Prostate gland (tissue), 2 donors: ENCODE measurements at regions of chr18 and their contacts with region 1.

Region 1: GRCh38 chr18:76875390-76876325 is 53.3 kb downstream of the ZNF236 start:
- DNase-seq: peak; percentile 26
- H3K4me3 ChIP-seq: no peak overlapping the region
- H3K27ac ChIP-seq: no peak overlapping the region
- H3K4me1 ChIP-seq: no peaks in the 10 kb centered on the region
- H3K27me3 ChIP-seq: no peaks in the 10 kb centered on the region
- CTCF ChIP-seq: peak; percentile 21 to 59 (median 52)
- POLR2A ChIP-seq: no peak

Region 2: DNA sequence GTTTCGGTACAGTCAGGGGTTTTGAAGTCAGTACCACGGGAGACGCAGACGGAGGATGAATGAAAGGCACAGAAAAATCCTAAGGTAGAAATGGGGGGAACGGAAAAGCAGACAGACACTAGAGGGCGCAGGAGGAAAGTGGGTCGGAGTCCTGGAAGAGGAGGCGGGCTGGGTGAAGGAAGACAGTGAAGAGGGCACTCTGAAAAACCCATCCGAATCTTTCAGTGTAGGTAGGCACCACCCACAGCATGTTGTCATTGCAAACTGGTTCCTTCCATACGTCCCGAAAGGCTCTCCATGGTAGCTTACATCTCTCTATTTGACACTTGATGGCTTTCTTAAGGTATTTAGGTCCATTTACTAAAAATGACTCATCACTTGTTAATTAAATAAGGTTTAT is 71.8 kb before region 1 on chr18:
- intact Hi-C with region 1: loop called (anchors 2 kb)
- DNase-seq: peak; percentile 54
- H3K4me3 ChIP-seq: no peak overlapping the region
- H3K27ac ChIP-seq: no peak overlapping the region
- H3K4me1 ChIP-seq: no peaks in the 10 kb centered on the region
- H3K27me3 ChIP-seq: no peaks in the 10 kb centered on the region
- CTCF ChIP-seq: peak; percentile 52 to 64 (median 56)
- POLR2A ChIP-seq: no peak